AG04450 (cell line): ENCODE measurements at regions of chr1 and their contacts with region 1.

Region 1: DNA sequence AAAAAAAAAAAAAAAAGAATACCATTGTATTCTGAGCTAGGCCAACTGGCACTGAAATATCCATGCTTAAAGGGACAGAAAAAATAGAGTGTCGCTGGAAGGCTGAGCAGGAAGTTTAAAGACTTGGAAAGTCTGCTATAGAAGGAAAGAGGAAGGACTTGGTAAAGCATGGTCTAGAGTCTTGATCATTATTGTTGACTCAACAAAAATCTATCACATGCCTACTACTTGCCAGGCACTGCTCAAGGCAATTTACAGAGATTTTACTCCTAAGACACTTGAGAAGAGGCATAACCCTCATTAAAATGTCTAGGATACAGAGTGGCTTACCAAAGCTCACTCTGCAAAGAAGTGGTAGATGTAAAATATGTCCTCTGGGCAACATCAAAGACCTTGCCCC is 324.0 kb upstream of the DAB1 start:
- DNase-seq: no peak
- H3K4me3 ChIP-seq: no peak overlapping the region
- H3K27ac ChIP-seq: no peak overlapping the region
- H3K27me3 ChIP-seq: no peaks in the 10 kb centered on the region
- CTCF ChIP-seq: no peak

Region 2: DNA sequence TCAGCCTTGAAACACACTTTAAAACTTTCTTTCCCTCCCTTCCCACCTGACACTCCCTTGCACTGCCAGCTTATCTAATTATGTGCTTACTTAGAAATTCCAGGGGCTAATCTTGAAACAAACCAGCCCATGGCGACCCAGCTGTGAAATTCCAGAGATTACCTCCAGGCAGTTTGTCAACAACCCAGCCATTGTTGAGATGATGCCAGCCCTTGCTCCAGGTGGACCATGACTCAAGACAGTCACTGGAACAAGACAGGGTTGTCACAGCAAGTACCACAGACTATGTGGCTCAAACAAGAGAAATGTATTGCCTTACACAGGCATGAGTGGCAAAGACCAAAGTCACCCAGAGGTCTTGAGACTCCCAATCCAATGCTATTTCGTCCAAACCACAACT is 936.5 kb before region 1 on chr1:
- CTCF ChIA-PET with region 1: no interaction called
- POLR2A ChIA-PET with region 1: interaction called, 10 read pairs
- DNase-seq: no peak
- H3K4me3 ChIP-seq: no peak overlapping the region
- H3K27ac ChIP-seq: no peak overlapping the region
- H3K27me3 ChIP-seq: no peaks in the 10 kb centered on the region
- CTCF ChIP-seq: no peak

Region 3: GRCh38 chr1:57572016-57572415 is 175.8 kb before region 1 on chr1:
- CTCF ChIA-PET with region 1: no interaction called
- POLR2A ChIA-PET with region 1: no interaction called
- DNase-seq: no peak
- H3K4me3 ChIP-seq: no peak overlapping the region
- H3K27ac ChIP-seq: no peak overlapping the region
- H3K27me3 ChIP-seq: no peaks in the 10 kb centered on the region
- CTCF ChIP-seq: no peak